MCF 10A (cell line): ENCODE measurements at regions of chr9 and their contacts with region 1.

Region 1: DNA sequence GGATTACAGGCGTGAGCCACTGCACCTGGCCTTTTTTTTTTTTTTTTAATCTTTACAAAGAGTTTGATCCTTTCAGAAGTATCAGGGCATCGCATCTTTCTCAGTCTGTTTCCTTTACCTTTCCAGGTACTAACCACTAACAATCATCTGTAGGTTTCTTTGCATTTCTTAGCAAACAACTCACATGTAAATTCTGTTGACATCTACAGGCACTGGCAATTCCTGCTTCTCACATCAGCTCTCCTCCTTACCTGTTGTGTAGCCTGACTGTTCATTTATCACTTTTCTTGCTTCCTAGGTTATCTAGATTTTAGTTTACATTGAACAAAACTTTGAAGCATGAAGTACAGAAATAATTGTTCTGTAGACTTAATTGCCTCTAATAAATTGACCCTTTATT is 27.5 kb upstream of the VPS13A start:
- DNase-seq: no peak
- H3K4me3 Mint-ChIP-seq: no peak overlapping the region
- H3K27ac Mint-ChIP-seq: no peak overlapping the region
- H3K4me1 Mint-ChIP-seq: peaks cover 12% of the 10 kb centered on the region
- H3K27me3 Mint-ChIP-seq: no peaks in the 10 kb centered on the region
- CTCF ChIP-seq: no peak

Region 2: GRCh38 chr9:76761448-76761847 is 388.4 kb before region 1 on chr9:
- CTCF ChIA-PET with region 1: interaction called, 11 read pairs
- POLR2A ChIA-PET with region 1: no interaction called
- intact Hi-C with region 1: loop called (anchors 2 kb)
- DNase-seq: peak; percentile 10
- H3K4me3 Mint-ChIP-seq: no peak overlapping the region
- H3K27ac Mint-ChIP-seq: no peak overlapping the region
- H3K4me1 Mint-ChIP-seq: peaks cover 7% of the 10 kb centered on the region
- H3K27me3 Mint-ChIP-seq: no peaks in the 10 kb centered on the region
- CTCF ChIP-seq: peak; percentile 32

Region 3: DNA sequence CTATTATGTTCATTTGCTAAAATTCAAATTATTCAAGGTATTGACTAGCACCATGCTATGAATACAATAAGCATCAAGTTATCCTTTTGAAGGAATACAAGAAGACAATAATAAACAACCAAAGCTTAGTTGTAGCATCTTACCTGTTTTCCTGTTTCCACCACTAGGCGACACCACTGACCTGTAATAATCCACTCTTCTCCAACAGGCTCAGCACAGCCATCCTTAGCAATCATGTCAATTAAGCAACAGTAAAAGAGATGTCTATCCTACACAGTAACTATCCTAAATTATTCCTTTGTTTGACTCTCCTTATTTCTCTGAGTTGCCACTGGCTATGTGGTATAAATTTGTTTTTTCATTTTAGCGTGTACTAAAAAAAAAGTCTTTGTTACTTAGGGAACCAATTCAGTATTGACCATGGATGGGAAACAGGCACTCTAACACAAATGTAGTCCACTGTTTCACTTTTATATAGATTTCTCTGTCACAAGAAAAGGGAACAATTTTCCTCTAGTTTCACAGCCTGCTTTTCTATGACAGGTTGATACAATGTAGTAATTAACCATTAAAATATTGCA is 339.4 kb before region 1 on chr9:
- CTCF ChIA-PET with region 1: interaction called, 121 read pairs
- POLR2A ChIA-PET with region 1: interaction called, 20 read pairs
- intact Hi-C with region 1: loop called (anchors 1 kb)
- DNase-seq: peak; percentile 72
- H3K4me3 Mint-ChIP-seq: no peak overlapping the region
- H3K27ac Mint-ChIP-seq: no peak overlapping the region
- H3K4me1 Mint-ChIP-seq: no peaks in the 10 kb centered on the region
- H3K27me3 Mint-ChIP-seq: peaks cover 14% of the 10 kb centered on the region
- CTCF ChIP-seq: peak; percentile 81

Region 4: GRCh38 chr9:76882686-76883085 is 267.2 kb before region 1 on chr9:
- CTCF ChIA-PET with region 1: no interaction called
- POLR2A ChIA-PET with region 1: no interaction called
- intact Hi-C with region 1: no loop called
- DNase-seq: no peak
- H3K4me3 Mint-ChIP-seq: no peak overlapping the region
- H3K27ac Mint-ChIP-seq: no peak overlapping the region
- H3K4me1 Mint-ChIP-seq: no peaks in the 10 kb centered on the region
- H3K27me3 Mint-ChIP-seq: no peaks in the 10 kb centered on the region
- CTCF ChIP-seq: no peak

Region 5: DNA sequence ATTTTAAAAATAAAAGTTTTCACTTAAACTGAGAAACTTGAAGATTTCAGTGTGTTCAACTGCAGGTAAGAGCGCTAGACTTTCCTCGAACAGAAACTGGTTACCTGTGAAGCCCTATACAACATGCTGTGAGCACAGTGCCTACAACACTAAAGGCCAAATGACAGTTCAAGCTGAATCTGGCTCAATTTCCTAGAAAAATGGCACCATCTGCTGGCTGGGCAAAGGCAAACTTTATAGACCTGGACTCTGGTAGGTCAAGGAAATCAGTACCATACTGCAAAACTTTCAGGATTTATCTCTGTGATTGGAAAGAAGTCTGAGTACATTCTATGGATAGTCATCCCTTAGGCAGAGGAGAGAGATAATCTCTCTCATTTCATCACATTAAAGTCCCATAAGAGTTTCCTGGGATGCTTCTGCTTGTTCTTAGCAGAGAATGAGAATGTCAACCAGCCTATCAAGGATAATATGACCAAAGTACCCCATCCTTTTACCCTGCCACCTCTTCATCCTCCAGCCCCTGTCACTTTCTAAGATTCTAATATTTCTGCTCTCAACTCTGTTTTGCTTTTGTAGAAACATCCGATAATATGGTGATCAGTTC is 162.2 kb before region 1 on chr9:
- CTCF ChIA-PET with region 1: interaction called, 4 read pairs
- POLR2A ChIA-PET with region 1: no interaction called
- intact Hi-C with region 1: loop called (anchors 1 kb)
- DNase-seq: peak; percentile 68
- H3K4me3 Mint-ChIP-seq: no peak overlapping the region
- H3K27ac Mint-ChIP-seq: no peak overlapping the region
- H3K4me1 Mint-ChIP-seq: no peaks in the 10 kb centered on the region
- H3K27me3 Mint-ChIP-seq: peaks cover 33% of the 10 kb centered on the region
- CTCF ChIP-seq: peak; percentile 58

Region 6: DNA sequence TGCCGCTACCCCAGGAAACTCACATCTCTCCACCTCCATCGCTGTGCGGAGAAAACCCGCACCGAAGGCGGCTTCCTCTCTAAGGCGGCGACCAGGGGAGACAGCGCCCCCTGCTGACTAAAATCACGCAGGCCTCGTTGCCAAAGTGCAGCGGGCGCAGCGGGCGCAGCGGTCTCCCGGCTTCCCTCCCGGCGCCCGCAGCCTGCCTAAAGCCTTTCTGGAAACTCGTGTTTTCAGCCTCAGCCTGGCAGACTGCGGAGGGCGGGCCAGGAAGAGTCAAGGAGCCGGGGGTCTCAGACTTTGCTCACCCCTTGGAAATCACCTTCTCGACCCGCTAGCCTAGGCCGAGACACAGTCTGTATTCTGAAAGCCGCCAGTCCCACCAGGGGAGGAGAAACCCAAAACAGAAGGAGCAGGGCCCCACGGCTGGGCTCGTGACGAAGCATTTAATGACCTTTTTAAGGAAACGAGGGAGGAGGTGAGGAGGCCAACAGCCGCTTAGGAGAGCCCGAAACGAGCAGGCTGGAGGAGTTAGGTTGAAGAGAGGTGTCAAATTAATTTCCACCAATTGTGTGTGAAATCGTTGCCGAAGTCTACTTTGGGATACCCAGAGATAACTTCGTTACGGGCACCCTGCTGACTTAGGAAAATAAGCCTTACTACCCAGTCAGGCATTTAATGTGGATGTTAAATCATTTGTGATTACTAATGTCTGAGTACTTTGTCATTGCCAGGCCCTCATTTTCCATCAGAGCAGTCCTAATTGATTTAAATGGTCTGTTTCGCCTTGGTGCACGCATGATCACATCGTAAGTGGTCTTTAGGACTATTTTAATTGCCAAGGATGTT is 137.7 kb before region 1 on chr9:
- CTCF ChIA-PET with region 1: no interaction called
- POLR2A ChIA-PET with region 1: no interaction called
- intact Hi-C with region 1: loop called (anchors 1 kb)
- DNase-seq: peak; percentile 55
- H3K4me3 Mint-ChIP-seq: no peak overlapping the region
- H3K27ac Mint-ChIP-seq: no peak overlapping the region
- H3K4me1 Mint-ChIP-seq: no peaks in the 10 kb centered on the region
- H3K27me3 Mint-ChIP-seq: peaks cover 18% of the 10 kb centered on the region
- CTCF ChIP-seq: peak; percentile 85

Region 7: GRCh38 chr9:77133011-77133410 is 16.9 kb before region 1 on chr9:
- CTCF ChIA-PET with region 1: no interaction called
- POLR2A ChIA-PET with region 1: no interaction called
- intact Hi-C with region 1: no loop called
- DNase-seq: no peak
- H3K4me3 Mint-ChIP-seq: no peak overlapping the region
- H3K27ac Mint-ChIP-seq: no peak overlapping the region
- H3K4me1 Mint-ChIP-seq: no peaks in the 10 kb centered on the region
- H3K27me3 Mint-ChIP-seq: no peaks in the 10 kb centered on the region
- CTCF ChIP-seq: no peak

Region 8: DNA sequence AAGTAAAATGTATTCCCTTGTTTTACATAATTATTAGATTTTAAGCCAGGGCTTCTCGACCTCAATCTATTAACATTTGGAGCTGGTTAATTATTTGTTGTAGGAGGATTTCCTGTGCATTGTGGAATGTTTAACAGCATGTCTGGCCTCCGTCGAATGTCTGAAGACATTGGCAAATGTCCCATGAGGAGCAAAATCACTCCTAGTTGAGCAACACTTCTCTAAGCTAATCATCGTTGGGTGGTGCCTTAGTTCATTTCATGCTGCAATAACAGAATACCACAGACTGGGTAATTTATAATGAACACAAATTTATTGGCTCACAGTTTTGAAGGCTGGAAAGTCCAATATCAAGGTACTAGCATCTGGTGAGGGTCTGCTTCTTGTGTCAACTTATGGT is 14.0 kb after region 1 on chr9:
- CTCF ChIA-PET with region 1: interaction called, 10 read pairs
- POLR2A ChIA-PET with region 1: interaction called, 9 read pairs
- intact Hi-C with region 1: no loop called
- DNase-seq: peak; percentile 81
- H3K4me3 Mint-ChIP-seq: peak overlapping the region; percentile 46
- H3K27ac Mint-ChIP-seq: peak overlapping the region; percentile 84
- H3K4me1 Mint-ChIP-seq: peaks cover 39% of the 10 kb centered on the region
- H3K27me3 Mint-ChIP-seq: no peaks in the 10 kb centered on the region
- CTCF ChIP-seq: no peak

Region 9: DNA sequence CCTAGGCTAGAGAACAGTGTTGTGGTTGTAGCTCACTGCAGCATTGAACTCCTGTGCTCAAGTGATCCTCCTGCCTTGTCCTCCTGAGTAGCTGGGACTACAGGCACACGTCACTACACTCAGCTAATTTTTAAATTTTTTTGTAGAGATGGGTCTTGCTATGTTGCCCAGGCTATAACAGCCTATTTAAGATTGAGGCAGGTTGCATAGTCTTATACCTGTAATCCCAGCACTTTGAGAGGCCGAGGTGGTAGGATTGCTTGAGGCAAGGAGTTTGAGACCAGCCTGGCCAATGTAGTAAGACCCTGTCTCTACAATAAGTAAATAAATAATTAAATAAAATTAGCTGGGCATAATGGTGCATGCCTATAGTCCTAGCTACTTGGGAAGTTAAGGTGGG is 107.4 kb after region 1 on chr9:
- CTCF ChIA-PET with region 1: no interaction called
- POLR2A ChIA-PET with region 1: no interaction called
- intact Hi-C with region 1: no loop called
- DNase-seq: no peak
- H3K4me3 Mint-ChIP-seq: no peak overlapping the region
- H3K27ac Mint-ChIP-seq: no peak overlapping the region
- H3K4me1 Mint-ChIP-seq: no peaks in the 10 kb centered on the region
- H3K27me3 Mint-ChIP-seq: no peaks in the 10 kb centered on the region
- CTCF ChIP-seq: no peak